HAP-1 (cell line): ENCODE measurements at regions of chr10 and their contacts with region 1.

Region 1: GRCh38 chr10:59808896-59809643 is 55.8 kb upstream of the MRLN start:
- DNase-seq: peak; percentile 59 to 88
- H3K4me3 ChIP-seq: no peak overlapping the region
- H3K4me1 ChIP-seq: peaks cover 4% of the 10 kb centered on the region
- H3K27me3 ChIP-seq: no peaks in the 10 kb centered on the region

Region 2: DNA sequence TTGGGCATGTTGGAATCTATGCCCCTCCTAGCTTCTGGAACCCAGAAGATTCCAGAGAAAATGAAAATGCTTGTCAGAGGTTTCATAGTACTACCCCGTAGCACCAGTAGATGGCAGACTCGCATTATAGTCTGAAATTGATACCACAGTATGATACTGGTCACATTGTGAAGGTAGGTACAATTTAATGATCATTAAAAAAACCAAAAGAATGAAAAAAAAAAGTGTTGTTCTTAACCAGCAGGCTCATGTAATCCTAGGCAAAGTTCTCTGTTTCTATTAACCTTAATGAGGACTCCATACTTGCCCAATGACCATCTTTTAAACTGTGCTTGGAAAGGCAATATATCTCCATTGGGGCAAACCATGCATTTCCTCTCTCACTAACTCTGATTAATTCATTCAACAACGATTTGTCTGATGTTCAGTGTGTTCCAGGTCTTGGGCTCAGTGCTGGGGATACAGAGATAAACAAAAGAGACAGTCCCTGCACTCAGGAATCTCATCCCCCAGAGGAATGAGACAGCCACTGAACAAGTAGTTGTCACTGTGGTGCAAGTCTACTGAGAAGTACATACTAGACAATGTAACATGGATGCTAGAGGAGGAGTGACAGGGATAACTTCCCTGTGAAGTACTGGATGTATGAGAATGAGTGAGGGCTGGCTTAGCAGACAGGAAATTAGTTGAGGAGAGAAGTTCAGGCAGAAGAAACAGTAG is 856.2 kb before region 1 on chr10:
- in situ Hi-C with region 1: loop called (anchors 25 kb)
- DNase-seq: peak; percentile 40 to 74
- H3K4me3 ChIP-seq: no peak overlapping the region
- H3K4me1 ChIP-seq: no peaks in the 10 kb centered on the region
- H3K27me3 ChIP-seq: no peaks in the 10 kb centered on the region

Region 3: DNA sequence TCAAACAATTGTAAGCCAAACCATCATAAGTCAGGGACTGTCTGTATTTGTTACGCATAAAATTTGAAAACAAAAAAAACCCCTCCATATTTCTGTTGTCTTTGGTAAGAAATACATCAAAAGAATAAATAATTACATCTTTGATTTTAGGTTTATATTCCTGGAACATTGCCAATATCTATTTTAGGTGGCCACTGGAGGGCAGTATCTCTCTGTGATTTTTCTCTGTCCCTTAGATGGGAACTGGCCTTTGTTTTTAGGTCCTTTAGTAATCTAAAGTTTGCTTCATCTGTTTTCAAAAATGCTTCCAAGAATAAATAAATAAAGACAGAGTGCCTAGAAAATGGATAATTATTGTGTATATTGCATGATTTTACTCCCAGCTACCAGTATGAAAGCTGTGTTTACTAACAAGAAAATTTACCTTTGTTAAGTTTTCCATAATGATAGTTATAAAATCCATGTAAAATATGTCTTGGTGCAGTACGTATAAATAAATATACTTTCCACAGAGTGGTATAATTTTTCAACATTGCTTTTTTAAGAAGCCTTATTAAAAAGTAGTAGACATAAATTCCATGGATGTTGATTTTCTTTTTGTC is 568.4 kb before region 1 on chr10:
- in situ Hi-C with region 1: loop called (anchors 25 kb)
- DNase-seq: peak; percentile 20 to 48
- H3K4me3 ChIP-seq: no peak overlapping the region
- H3K4me1 ChIP-seq: no peaks in the 10 kb centered on the region; the same call in 1 of the 2 replicates
- H3K27me3 ChIP-seq: no peaks in the 10 kb centered on the region

Region 4: DNA sequence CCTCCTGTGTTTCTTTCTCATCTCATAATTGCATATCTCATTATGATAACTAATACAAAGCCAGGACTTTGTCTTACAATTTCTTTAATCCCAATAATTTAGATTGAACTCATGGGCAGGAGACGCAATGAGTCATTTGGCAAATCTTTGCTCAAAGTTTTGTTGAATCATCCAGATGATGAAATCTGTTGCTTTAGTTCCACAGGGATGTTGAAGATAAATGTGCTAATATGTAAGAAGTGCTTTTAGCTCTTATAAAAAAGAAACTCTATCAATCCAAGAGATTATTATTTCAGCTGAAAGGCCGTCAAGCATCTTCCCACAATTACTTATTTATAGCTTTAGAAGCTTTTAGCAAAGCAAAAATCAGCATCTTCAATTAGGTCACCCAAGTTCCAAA is 617.3 kb after region 1 on chr10:
- in situ Hi-C with region 1: no loop called
- DNase-seq: no peak
- H3K4me3 ChIP-seq: no peak overlapping the region
- H3K4me1 ChIP-seq: peaks cover 11% of the 10 kb centered on the region
- H3K27me3 ChIP-seq: no peaks in the 10 kb centered on the region; the same call in 1 of the 2 replicates